Heart right ventricle (tissue), 16 donors: ENCODE measurements at regions of chr19 and their contacts with region 1.

Region 1: GRCh38 chr19:29263305-29264135 is 50.6 kb upstream of the UQCRFS1 start:
- DNase-seq: peak in 1 of 2 donors; percentile 22
- ATAC-seq: peak in 5 of 8 donors; percentile 23 to 53 (median 24)
- H3K4me3 ChIP-seq: no peak overlapping the region
- H3K27ac ChIP-seq: no peak overlapping the region
- H3K4me1 ChIP-seq: no peaks in the 10 kb centered on the region
- H3K27me3 ChIP-seq: peaks cover 0 to 33% (median 8%) of the 10 kb centered on the region in 7 donors
- CTCF ChIP-seq: peak; percentile 37 to 84 (median 71)

Region 2: GRCh38 chr19:29121684-29122083 is 141.8 kb before region 1 on chr19:
- intact Hi-C with region 1: loop called in 4 of 10 experiments (anchors 10 kb)
- DNase-seq: no peak
- ATAC-seq: peak in 1 of 8 donors; percentile 33
- H3K4me3 ChIP-seq: no peak overlapping the region
- H3K27ac ChIP-seq: no peak overlapping the region
- H3K4me1 ChIP-seq: no peaks in the 10 kb centered on the region
- H3K27me3 ChIP-seq: peaks cover 0 to 23% (median 8%) of the 10 kb centered on the region in 7 donors
- CTCF ChIP-seq: peak in 8 of 9 donors; percentile 4 to 42 (median 38)